CD8-positive, alpha-beta T cell (primary cell): ENCODE measurements at regions of chrX and their contacts with region 1.

Region 1: GRCh38 chrX:137401092-137401491 is 164.8 kb upstream of the ZIC3 start:
- DNase-seq: no peak
- ATAC-seq: no peak
- H3K4me3 ChIP-seq: no peak overlapping the region
- H3K4me3 Mint-ChIP-seq: no peak overlapping the region
- H3K27ac ChIP-seq: no peak overlapping the region
- H3K27ac Mint-ChIP-seq: no peak overlapping the region
- H3K4me1 ChIP-seq: no peaks in the 10 kb centered on the region
- H3K4me1 Mint-ChIP-seq: no peaks in the 10 kb centered on the region
- H3K27me3 ChIP-seq: no peaks in the 10 kb centered on the region
- H3K27me3 Mint-ChIP-seq: peaks cover 3% of the 10 kb centered on the region
- CTCF ChIP-seq: no peak

Region 2: DNA sequence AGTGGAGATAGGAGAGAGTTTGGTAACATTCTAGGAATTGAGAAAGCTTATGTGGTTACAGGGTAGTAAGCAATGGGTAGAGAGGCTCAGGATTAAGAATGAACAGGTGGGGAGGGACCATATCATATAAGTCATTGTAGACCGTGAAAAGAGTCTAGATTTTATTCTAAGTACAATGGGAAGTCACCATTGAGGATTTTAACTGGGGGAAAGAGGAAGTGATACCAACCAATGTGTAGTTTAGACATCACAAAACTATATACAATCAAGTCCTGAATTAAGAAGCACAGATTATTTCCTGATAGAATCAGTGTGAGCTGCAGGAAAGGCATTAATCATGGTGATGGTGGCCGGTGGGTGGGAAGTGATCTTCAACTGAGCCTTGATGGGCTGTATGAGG is 13.4 kb before region 1 on chrX:
- CTCF ChIA-PET with region 1: no interaction called
- POLR2A ChIA-PET with region 1: no interaction called
- intact Hi-C with region 1: loop called in 1 of 2 experiments (anchors 1 kb)
- DNase-seq: no peak
- ATAC-seq: no peak
- H3K4me3 ChIP-seq: no peak overlapping the region
- H3K4me3 Mint-ChIP-seq: no peak overlapping the region
- H3K27ac ChIP-seq: no peak overlapping the region
- H3K27ac Mint-ChIP-seq: no peak overlapping the region
- H3K4me1 ChIP-seq: no peaks in the 10 kb centered on the region
- H3K4me1 Mint-ChIP-seq: no peaks in the 10 kb centered on the region
- H3K27me3 ChIP-seq: no peaks in the 10 kb centered on the region
- H3K27me3 Mint-ChIP-seq: no peaks in the 10 kb centered on the region
- CTCF ChIP-seq: no peak